Right cardiac atrium (tissue), 5 donors: ENCODE measurements at regions of chr9 and their contacts with region 1.

Region 1: GRCh38 chr9:113511856-113512761 is 48.6 kb downstream of the RGS3 start:
- DNase-seq: no peak
- ATAC-seq: no peak
- H3K4me3 ChIP-seq: no peak overlapping the region
- H3K27ac ChIP-seq: peak overlapping the region; percentile 61
- H3K4me1 ChIP-seq: peaks cover 9% of the 10 kb centered on the region
- H3K27me3 ChIP-seq: no peaks in the 10 kb centered on the region

Region 2: GRCh38 chr9:113454914-113455761 is 57.0 kb before region 1 on chr9:
- intact Hi-C with region 1: loop called in 3 of 4 experiments (anchors 10 kb)
- DNase-seq: peak; percentile 75 to 88 (median 85)
- ATAC-seq: peak; percentile 96 to 98
- H3K4me3 ChIP-seq: no peak overlapping the region
- H3K27ac ChIP-seq: peak overlapping the region; percentile 99
- H3K4me1 ChIP-seq: peaks cover 8% of the 10 kb centered on the region
- H3K27me3 ChIP-seq: no peaks in the 10 kb centered on the region

Region 3: GRCh38 chr9:113468716-113469448 is 43.2 kb before region 1 on chr9:
- intact Hi-C with region 1: loop called in 1 of 4 experiments (anchors 5 kb)
- DNase-seq: peak in 2 of 3 donors; percentile 66 to 74
- ATAC-seq: peak; percentile 77 to 81
- H3K4me3 ChIP-seq: no peak overlapping the region
- H3K27ac ChIP-seq: peak overlapping the region; percentile 61
- H3K4me1 ChIP-seq: peaks cover 2% of the 10 kb centered on the region
- H3K27me3 ChIP-seq: no peaks in the 10 kb centered on the region